HEK293 (cell line): ENCODE measurements at regions of chr17 and their contacts with region 1.

Region 1: DNA sequence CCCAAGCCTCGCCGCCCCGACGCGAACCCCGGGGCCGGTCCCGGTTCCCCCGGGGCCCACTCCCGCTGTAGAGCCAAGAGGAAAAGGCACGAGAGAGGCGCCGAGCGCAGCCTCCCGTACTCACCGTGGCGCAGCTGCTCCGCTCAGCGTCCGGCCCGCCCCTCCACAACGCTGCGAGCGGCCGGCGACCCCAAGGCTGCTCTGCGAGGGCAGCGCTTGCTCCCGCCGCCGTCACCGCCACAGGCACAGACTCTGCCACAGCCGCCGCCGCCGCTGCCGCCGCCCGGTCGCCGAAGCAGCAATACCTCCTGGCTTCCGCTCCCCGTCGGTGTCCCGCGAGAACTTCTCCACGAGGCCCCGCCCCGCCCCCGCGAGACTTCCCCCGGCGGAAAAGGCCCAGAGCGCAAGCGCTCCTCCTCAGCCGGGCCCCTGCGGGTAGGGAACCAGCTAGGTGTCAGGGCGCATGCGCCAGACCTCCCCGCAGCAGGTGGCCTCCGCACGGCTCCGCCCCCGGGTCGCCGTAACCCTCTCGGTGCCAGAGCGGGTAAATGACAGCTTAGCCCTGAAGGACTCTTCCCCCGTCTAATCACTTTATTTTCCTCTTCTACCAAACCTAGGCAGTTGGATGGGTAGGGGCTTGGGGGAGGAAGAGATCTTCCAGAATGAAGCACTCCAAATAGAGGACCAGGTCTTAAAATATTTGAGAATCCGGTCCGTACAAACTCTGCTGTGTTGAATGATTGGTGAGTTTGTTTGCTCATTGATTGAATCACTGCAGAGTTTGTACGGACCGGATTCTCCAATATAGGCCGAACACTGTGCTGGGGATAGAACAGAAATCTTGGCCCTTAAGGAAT is at the start of gene GRB2:
- H3K4me3 ChIP-seq: peak within 1 kb of the TSS; percentile 96
- H3K27ac ChIP-seq: peak within 1 kb of the TSS; percentile 94
- H3K4me1 ChIP-seq: 0 out of 2 replicates have a peak, but pooled peaks cover 8% of the 10 kb centered on the region
- CTCF ChIP-seq: no peak

Region 2: DNA sequence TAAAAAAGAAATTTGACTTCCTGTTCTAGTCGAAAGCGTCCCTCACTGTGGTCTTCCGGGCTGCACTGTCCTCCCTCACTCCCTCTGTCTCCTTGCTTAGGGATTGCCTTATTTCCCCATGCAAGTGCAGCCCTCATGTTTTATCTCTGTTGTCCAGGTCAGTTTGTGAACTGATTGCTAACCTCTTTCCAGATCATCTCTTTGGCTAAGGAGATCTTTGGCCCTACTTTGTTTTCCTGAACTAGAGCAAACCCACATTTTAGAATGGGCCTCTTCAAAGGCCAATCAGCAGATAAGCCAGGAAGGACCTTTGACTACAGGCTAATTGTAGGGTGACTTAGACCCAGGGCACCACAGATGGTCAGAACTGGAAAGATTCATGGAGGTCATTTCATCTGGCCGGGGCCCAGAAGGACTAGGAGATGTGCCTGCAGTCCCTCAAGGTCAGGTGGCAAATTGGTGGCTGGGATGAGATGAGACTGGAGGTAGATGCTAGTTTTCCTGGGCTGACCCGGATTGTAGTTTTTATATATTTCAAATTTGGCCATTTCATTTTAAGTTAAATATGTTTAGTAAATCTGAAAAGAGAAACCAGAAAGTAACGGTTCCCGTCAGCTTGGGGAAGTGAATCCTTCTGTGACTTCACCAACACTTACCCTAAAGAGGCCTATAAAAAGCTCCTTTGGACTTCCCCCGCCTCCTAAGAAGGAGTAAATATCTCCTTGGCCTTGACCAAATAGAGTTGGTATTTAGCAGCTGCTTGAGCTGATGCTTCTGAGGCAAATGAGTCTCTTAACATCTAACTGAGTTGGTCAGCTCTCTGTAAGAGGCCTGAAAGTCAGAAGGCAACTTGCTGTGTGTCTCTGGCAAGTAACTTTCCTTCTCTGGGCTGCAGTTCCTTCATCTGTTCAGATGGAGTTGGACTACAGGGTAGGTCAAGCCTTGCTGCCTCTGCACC is 110.1 kb before region 1 on chr17:
- CTCF ChIA-PET with region 1: no interaction called
- POLR2A ChIA-PET with region 1: interaction called, 10 read pairs
- H3K4me3 ChIP-seq: no peak overlapping the region
- H3K27ac ChIP-seq: no peak overlapping the region
- H3K4me1 ChIP-seq: no peaks in the 10 kb centered on the region
- CTCF ChIP-seq: no peak